ENCODE measurements at regions of chr4 and their contacts with region 1.

Region 1: GRCh38 chr4:94463771-94464170 is 12.0 kb downstream of the PDLIM5 start:
- DNase-seq: no peak
- ATAC-seq: peak in 1 of 4 donors; percentile 18
- H3K4me3 ChIP-seq: peak overlapping the region in 3 of 12 donors; percentile 3 to 18 (median 7)
- H3K27ac ChIP-seq: peak overlapping the region in 8 of 12 donors; percentile 0 to 100 (median 98)
- H3K4me1 ChIP-seq: peaks cover 3 to 99% (median 52%) of the 10 kb centered on the region in 12 donors
- H3K27me3 ChIP-seq: no peaks in the 10 kb centered on the region
- CTCF ChIP-seq: no peak
- POLR2A ChIP-seq: no peak

Region 2: DNA sequence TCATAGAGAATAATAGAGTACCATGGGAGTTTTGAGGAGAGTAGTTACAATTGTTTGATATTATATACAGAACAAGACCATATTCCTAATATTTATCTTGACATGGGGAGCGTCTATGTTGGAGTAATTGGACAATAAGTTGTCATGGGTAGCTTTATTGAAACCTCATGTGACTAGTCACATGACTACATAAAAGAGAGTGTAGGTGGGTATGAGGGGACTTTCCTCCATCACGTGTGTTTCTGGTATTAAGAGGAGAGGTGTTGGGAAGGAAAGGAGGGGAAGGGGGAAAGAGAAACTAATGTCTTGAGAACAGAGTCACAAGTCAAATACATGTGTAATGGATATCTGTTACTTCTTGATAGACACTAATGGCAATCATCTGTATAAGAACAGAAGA is 21.0 kb after region 1 on chr4:
- intact Hi-C with region 1: loop called in 1 of 10 experiments (anchors 1 kb)
- DNase-seq: no peak
- ATAC-seq: no peak
- H3K4me3 ChIP-seq: no peak overlapping the region
- H3K27ac ChIP-seq: peak overlapping the region in 5 of 12 donors; percentile 0 to 35 (median 33)
- H3K4me1 ChIP-seq: peaks cover 5 to 88% (median 68%) of the 10 kb centered on the region in 12 donors
- H3K27me3 ChIP-seq: no peaks in the 10 kb centered on the region
- CTCF ChIP-seq: no peak
- POLR2A ChIP-seq: no peak

Region 3: GRCh38 chr4:94583914-94584641 is 120.3 kb after region 1 on chr4:
- intact Hi-C with region 1: loop called in 2 of 10 experiments (anchors 10 kb)
- DNase-seq: no peak
- ATAC-seq: peak in 2 of 4 donors; percentile 33 to 38
- H3K4me3 ChIP-seq: no peak overlapping the region
- H3K27ac ChIP-seq: peak overlapping the region in 4 of 12 donors; percentile 1 to 37 (median 32)
- H3K4me1 ChIP-seq: peaks cover 0 to 46% (median 16%) of the 10 kb centered on the region in 12 donors
- H3K27me3 ChIP-seq: no peaks in the 10 kb centered on the region
- CTCF ChIP-seq: no peak
- POLR2A ChIP-seq: no peak

Region 4: GRCh38 chr4:94714365-94715160 is 250.8 kb after region 1 on chr4:
- intact Hi-C with region 1: no loop called
- DNase-seq: no peak
- ATAC-seq: no peak
- H3K4me3 ChIP-seq: no peak overlapping the region
- H3K27ac ChIP-seq: peak overlapping the region in 1 of 12 donors; percentile 32
- H3K4me1 ChIP-seq: no peaks in the 10 kb centered on the region
- H3K27me3 ChIP-seq: peaks cover 0 to 4% (median 0%) of the 10 kb centered on the region in 9 donors
- CTCF ChIP-seq: no peak
- POLR2A ChIP-seq: no peak

Measured in heart left ventricle (tissue), 16 donors.